PC-3 (cell line): ENCODE measurements at regions of chr15 and their contacts with region 1.

Region 1: GRCh38 chr15:93001881-93002280 is 87.1 kb downstream of the RGMA start:
- DNase-seq: peak; percentile 21
- ATAC-seq: no peak
- H3K4me3 ChIP-seq: no peak overlapping the region
- H3K27ac ChIP-seq: no peak overlapping the region
- H3K4me1 ChIP-seq: no peaks in the 10 kb centered on the region
- H3K27me3 ChIP-seq: no peaks in the 10 kb centered on the region
- CTCF ChIP-seq: peak; percentile 50

Region 2: DNA sequence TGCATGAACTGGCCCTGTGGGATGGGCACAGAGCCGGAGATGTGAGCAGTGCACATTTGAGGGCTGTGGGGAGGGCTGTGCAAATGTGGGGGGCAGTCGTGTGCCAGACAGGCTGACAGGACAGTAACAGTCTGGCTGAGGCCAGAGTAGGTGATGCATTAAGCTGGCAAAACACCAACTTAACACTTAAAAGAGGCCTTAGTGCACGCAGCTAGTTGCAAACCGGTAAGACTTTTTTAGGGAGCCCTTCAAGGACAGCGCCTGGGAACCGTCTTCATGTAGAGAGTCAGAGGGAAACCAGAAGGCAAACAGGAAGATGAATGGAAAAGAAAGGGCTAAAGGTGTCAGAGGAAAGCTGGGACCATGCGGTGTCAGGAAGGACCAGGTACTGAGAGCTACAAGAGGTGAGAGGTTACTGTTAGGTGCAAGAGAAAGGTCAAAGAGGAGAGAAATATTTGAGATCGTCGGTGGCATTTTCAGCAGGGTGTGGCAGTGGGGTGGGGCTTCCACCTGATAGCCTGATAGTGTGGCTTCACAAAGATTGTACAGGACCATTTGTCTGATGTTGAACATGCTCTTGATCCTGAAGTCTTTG is 131.8 kb before region 1 on chr15:
- CTCF ChIA-PET with region 1: interaction called, 11 read pairs
- POLR2A ChIA-PET with region 1: no interaction called
- intact Hi-C with region 1: no loop called
- DNase-seq: peak; percentile 42
- ATAC-seq: no peak
- H3K4me3 ChIP-seq: no peak overlapping the region
- H3K27ac ChIP-seq: peak overlapping the region; percentile 30
- H3K4me1 ChIP-seq: peaks cover 17% of the 10 kb centered on the region
- H3K27me3 ChIP-seq: no peaks in the 10 kb centered on the region
- CTCF ChIP-seq: no peak

Region 3: DNA sequence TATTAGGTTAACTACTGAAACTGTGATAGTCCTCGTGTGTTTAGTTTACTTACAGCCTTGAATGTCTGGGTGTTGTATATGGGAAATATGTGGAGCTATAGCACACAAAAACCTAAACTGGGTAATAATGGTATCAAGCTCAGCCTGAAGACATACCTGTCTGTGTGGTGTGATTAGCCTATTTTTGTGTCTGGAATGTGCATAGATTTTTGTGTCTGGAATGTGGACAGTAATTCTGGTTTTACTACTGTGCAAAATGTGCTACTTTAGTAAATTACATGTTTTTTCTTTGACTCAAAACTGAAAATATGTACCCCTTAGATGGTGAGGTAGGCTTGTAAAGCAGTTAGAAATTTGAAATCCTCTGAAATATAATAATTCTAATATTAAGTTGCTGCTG is 58.3 kb before region 1 on chr15:
- CTCF ChIA-PET with region 1: interaction called, 12 read pairs
- POLR2A ChIA-PET with region 1: no interaction called
- intact Hi-C with region 1: no loop called
- DNase-seq: no peak
- ATAC-seq: no peak
- H3K4me3 ChIP-seq: no peak overlapping the region
- H3K27ac ChIP-seq: no peak overlapping the region
- H3K4me1 ChIP-seq: no peaks in the 10 kb centered on the region
- H3K27me3 ChIP-seq: no peaks in the 10 kb centered on the region
- CTCF ChIP-seq: no peak